Mammary epithelial cell (primary cell): ENCODE measurements at regions of chr3 and their contacts with region 1.

Region 1: GRCh38 chr3:186472456-186473008 is 71.6 kb downstream of the CRYGS start:
- DNase-seq: no peak
- H3K4me3 ChIP-seq: no peak overlapping the region
- H3K27ac ChIP-seq: no peak overlapping the region
- H3K4me1 ChIP-seq: peaks cover 20% of the 10 kb centered on the region
- H3K27me3 ChIP-seq: peaks cover 2% of the 10 kb centered on the region
- CTCF ChIP-seq: no peak

Region 2: GRCh38 chr3:186381424-186382216 is 90.9 kb before region 1 on chr3:
- CTCF ChIA-PET with region 1: no interaction called
- dilution Hi-C with region 1: loop called (anchors 5 kb)
- in situ Hi-C with region 1: no loop called
- intact Hi-C with region 1: no loop called
- DNase-seq: peak; percentile 16
- H3K4me3 ChIP-seq: no peak overlapping the region
- H3K27ac ChIP-seq: no peak overlapping the region
- H3K4me1 ChIP-seq: peaks cover 17% of the 10 kb centered on the region
- H3K27me3 ChIP-seq: no peaks in the 10 kb centered on the region
- CTCF ChIP-seq: no peak